A549 (cell line): ENCODE measurements at regions of chr18 and their contacts with region 1.

Region 1: GRCh38 chr18:74353169-74353775 is 37.6 kb downstream of the C18orf63 start:
- DNase-seq: peak; percentile 26 to 61
- ATAC-seq: peak; percentile 86 to 89
- H3K4me3 ChIP-seq: no peak overlapping the region
- H3K27ac ChIP-seq: no peak overlapping the region
- H3K4me1 ChIP-seq: no peaks in the 10 kb centered on the region
- CTCF ChIP-seq: peak; percentile 67
- EP300 ChIP-seq: no peak
- POLR2A ChIP-seq: no peak
- RAD21 ChIP-seq: peak; percentile 65 to 66

Region 2: DNA sequence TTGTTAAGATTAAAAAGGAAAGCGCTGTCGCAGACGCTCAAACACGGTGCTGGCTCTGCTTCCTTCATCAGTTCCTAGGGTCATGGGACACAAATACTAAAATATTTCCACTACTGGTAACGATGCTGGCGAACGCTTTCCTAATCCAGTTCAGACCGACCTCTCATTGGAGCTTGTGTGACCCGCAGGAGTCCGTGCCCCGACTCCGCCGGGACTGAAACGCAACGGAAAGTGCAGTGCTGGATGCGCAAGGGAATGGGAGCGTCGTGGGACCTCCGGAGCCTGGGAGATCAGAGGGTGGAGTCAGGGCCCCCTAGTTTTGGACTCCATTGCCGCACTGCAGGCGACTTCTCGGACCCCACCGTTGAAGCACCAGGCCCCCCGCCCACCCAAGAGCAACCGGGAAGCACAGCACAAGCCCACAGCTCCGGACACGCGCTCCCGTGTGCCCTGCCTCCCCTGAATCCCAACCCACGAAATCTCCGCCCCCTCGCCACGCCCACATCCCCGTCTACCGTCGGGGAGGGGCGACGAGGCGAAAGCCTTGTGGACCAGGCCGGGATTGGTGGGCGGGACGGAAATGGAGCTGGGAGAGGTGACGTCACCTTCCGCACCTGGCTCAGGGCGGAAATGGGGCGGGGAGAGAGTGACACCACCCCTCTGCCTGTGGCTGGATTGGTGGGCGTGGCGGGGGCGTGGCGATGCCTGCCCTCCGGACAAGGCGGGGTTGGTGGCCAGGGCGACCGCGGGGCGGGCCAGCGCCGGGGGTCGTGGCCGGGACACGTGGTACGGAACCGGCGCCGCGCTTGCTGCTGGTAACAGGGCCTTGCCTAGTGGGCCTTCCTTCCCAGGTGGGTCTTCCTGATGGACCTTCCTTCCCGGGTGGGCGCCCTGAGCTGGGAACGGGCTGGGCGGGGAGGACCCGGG is 142.6 kb after region 1 on chr18 and contains the start of gene CNDP2:
- CTCF ChIA-PET with region 1: interaction called, 60 read pairs
- POLR2A ChIA-PET with region 1: no interaction called
- DNase-seq: peak; percentile 84 to 97
- ATAC-seq: peak; percentile 85 to 93
- H3K4me3 ChIP-seq: peak within 1 kb of the TSS; percentile 94
- H3K27ac ChIP-seq: peak within 1 kb of the TSS; percentile 92 to 98
- H3K4me1 ChIP-seq: peaks cover 6% of the 10 kb centered on the region; the same call in 1 of the 3 replicates
- CTCF ChIP-seq: no peak
- EP300 ChIP-seq: no peak
- POLR2A ChIP-seq: peak; percentile 74
- RAD21 ChIP-seq: no peak
- polyA plus RNA-seq, gene CNDP2: 77.6 and 93.7 TPM in 2 replicates

Region 3: DNA sequence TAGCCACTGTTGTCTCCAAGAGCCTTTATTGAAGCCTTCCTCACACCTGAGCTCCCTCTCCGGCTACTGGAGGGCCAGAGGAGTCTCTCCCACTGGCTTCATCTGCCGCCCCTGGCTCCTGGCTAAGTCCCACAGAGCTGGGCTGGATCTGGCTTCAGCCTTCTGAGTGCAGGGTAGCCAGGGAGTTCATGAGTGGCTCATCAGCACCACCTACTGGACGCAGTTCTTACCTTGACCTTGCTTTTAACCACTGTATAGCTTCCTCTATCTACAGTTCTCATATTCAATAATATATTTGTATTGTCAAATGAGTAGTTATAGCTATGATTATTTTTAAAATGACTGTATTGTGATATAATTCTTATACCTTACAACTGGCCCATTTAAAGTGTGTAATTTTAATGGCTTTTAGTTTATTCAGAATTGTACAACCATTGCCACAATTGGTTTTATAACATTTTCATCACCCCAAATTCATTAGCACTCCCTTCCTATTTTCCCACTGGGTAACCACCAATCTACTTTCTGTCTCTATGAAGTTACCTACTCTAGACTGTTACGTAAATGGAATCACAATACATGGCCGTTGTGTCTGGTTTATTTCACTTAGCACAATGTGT is 198.8 kb after region 1 on chr18:
- CTCF ChIA-PET with region 1: interaction called, 36 read pairs
- POLR2A ChIA-PET with region 1: no interaction called
- DNase-seq: peak; percentile 70 to 71
- ATAC-seq: peak; percentile 98 to 100
- H3K4me3 ChIP-seq: no peak overlapping the region
- H3K27ac ChIP-seq: no peak overlapping the region
- H3K4me1 ChIP-seq: no peaks in the 10 kb centered on the region
- CTCF ChIP-seq: peak; percentile 70
- EP300 ChIP-seq: no peak
- POLR2A ChIP-seq: no peak
- RAD21 ChIP-seq: peak; percentile 74 to 79